ENCODE measurements at regions of chr16 and their contacts with region 1.

Region 1: DNA sequence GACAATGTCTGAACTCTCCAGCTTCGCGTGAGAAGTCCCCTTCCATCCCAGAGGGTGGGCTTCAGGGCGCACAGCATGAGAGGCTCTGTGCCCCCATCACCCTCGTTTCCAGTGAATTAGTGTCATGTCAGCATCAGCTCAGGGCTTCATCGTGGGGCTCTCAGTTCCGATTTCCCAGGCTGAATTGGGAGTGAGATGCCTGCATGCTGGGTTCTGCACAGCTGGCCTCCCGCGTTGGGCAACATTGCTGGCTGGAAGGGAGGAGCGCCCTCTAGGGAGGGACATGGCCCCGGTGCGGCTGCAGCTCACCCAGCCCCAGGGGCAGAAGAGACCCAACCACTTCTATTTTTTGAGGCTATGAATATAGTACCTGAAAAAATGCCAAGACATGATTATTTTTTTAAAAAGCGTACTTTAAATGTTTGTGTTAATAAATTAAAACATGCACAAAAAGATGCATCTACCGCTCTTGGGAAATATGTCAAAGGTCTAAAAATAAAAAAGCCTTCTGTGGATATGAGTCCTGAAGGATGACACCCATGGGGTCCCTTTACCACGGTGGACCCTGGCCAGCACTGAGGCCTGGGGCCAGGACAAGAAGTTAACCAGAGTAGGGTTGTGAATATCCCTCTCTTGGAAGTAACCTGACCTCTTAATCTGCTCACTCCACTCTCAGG is 10.5 kb upstream of the ITGAD start:
- DNase-seq: no peak
- ATAC-seq: peak; percentile 89
- H3K4me3 ChIP-seq: no peak overlapping the region
- H3K27ac ChIP-seq: no peak overlapping the region
- H3K4me1 ChIP-seq: no peaks in the 10 kb centered on the region
- H3K27me3 ChIP-seq: peaks cover 0 to 3% of the 10 kb centered on the region in 2 experiments; a peak in 1 of 4 replicates
- CTCF ChIP-seq: peak; percentile 78 to 92 (median 87)
- EP300 ChIP-seq: no peak
- POLR2A ChIP-seq: no peak
- RAD21 ChIP-seq: peak; percentile 82

Region 2: GRCh38 chr16:30961384-30961783 is 421.2 kb before region 1 on chr16:
- CTCF ChIA-PET with region 1: no interaction called
- POLR2A ChIA-PET with region 1: no interaction called
- RAD21 ChIA-PET with region 1: no interaction called
- SMC1A ChIA-PET with region 1: no interaction called
- in situ Hi-C with region 1: no loop called
- intact Hi-C with region 1: no loop called
- DNase-seq: no peak
- ATAC-seq: no peak
- H3K4me3 ChIP-seq: no peak overlapping the region
- H3K27ac ChIP-seq: no peak overlapping the region
- H3K4me1 ChIP-seq: peaks cover 8% of the 10 kb centered on the region
- H3K27me3 ChIP-seq: no peaks in the 10 kb centered on the region
- CTCF ChIP-seq: no peak
- EP300 ChIP-seq: no peak
- POLR2A ChIP-seq: no peak
- RAD21 ChIP-seq: no peak

Region 3: GRCh38 chr16:31202414-31203375 is 179.9 kb before region 1 on chr16 and contains the start of gene PYCARD:
- CTCF ChIA-PET with region 1: interaction called, 26 read pairs
- POLR2A ChIA-PET with region 1: no interaction called
- RAD21 ChIA-PET with region 1: interaction called, 6 read pairs
- SMC1A ChIA-PET with region 1: interaction called, 8 read pairs
- in situ Hi-C with region 1: no loop called
- intact Hi-C with region 1: loop called (anchors 1 kb)
- DNase-seq: no peak
- ATAC-seq: peak; percentile 51
- H3K4me3 ChIP-seq: peak within 1 kb of the TSS; percentile 86
- H3K27ac ChIP-seq: peak within 1 kb of the TSS; percentile 76
- H3K4me1 ChIP-seq: peaks cover 24% of the 10 kb centered on the region
- H3K27me3 ChIP-seq: no peaks in the 10 kb centered on the region
- CTCF ChIP-seq: no peak
- EP300 ChIP-seq: no peak
- POLR2A ChIP-seq: peak; percentile 76
- RAD21 ChIP-seq: no peak
- polyA plus RNA-seq, gene PYCARD: 5.1 to 14.9 TPM

Region 4: DNA sequence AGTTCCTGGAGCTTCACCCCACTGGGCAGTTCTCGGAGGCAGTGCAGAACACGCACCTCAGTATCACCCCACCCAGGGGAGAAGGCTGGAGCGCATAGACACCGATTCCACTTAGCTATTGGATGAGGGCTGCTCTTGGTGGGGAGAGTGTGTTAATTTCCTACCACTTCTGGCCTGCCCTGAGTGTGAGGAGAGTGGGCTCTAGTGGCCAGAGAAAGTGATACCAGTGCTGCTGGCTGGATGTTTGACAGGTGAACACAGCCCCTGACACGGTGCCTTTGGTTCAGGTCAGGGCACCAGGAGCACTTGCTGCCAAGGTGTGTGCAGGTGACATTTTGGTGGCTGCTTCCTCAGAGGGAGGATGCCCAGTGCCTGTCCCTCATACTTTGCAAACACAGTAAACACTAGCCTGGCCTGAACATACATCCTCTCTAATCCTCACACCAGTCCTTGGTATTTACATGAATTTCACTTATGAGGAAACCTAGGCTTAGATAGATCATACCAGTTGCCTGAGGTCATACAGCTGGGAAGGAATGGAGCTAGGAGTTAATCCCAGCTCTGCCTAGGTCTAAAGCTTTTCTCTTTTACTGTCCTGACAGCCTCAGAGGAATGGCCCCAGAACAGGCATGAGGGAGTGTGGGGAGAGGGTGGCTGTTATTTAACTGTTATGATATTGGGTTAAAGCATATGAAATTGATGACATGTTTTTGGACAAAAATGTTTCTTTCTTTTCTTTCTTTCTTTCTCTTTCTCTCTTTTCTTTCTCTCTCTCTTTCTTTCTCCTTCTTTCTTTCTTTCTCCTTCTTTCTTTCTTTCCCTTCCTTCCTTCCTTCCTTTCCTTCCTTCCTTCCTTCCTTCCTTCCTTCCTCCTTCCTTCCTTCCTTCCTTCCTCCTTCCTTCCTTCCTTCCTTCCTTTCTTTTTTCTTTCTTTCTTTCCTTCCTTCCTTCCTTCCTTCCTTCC is 48.7 kb before region 1 on chr16:
- CTCF ChIA-PET with region 1: interaction called, 9 read pairs
- POLR2A ChIA-PET with region 1: no interaction called
- RAD21 ChIA-PET with region 1: interaction called, 4 read pairs
- SMC1A ChIA-PET with region 1: interaction called, 13 read pairs
- in situ Hi-C with region 1: no loop called
- intact Hi-C with region 1: no loop called
- DNase-seq: no peak
- ATAC-seq: peak; percentile 96
- H3K4me3 ChIP-seq: no peak overlapping the region
- H3K27ac ChIP-seq: no peak overlapping the region
- H3K4me1 ChIP-seq: no peaks in the 10 kb centered on the region
- H3K27me3 ChIP-seq: no peaks in the 10 kb centered on the region
- CTCF ChIP-seq: peak; percentile 63 to 80 (median 77)
- EP300 ChIP-seq: no peak
- POLR2A ChIP-seq: no peak
- RAD21 ChIP-seq: peak; percentile 92

Region 5: GRCh38 chr16:31393056-31393455 is 10.4 kb after region 1 on chr16 and contains the start of gene ITGAD:
- CTCF ChIA-PET with region 1: interaction called, 12 read pairs
- POLR2A ChIA-PET with region 1: interaction called, 4 read pairs
- RAD21 ChIA-PET with region 1: interaction called, 3 read pairs
- SMC1A ChIA-PET with region 1: interaction called, 7 read pairs
- in situ Hi-C with region 1: no loop called
- intact Hi-C with region 1: no loop called
- DNase-seq: no peak
- ATAC-seq: peak; percentile 82
- H3K4me3 ChIP-seq: no peak within 1 kb of the TSS
- H3K27ac ChIP-seq: no peak within 1 kb of the TSS
- H3K4me1 ChIP-seq: peaks cover 4% of the 10 kb centered on the region
- H3K27me3 ChIP-seq: no peaks in the 10 kb centered on the region
- CTCF ChIP-seq: no peak
- EP300 ChIP-seq: no peak
- POLR2A ChIP-seq: no peak
- RAD21 ChIP-seq: no peak
- polyA plus RNA-seq, gene ITGAD: 0.29 to 0.31 TPM

Region 6: GRCh38 chr16:31427441-31428278 is 45.0 kb after region 1 on chr16:
- CTCF ChIA-PET with region 1: interaction called, 9 read pairs
- POLR2A ChIA-PET with region 1: interaction called, 3 read pairs
- RAD21 ChIA-PET with region 1: interaction called, 3 read pairs
- SMC1A ChIA-PET with region 1: interaction called, 18 read pairs
- in situ Hi-C with region 1: no loop called
- intact Hi-C with region 1: no loop called
- DNase-seq: no peak
- ATAC-seq: no peak
- H3K4me3 ChIP-seq: no peak overlapping the region
- H3K27ac ChIP-seq: no peak overlapping the region
- H3K4me1 ChIP-seq: peaks cover under 1% of the 10 kb centered on the region
- H3K27me3 ChIP-seq: no peaks in the 10 kb centered on the region
- CTCF ChIP-seq: no peak
- EP300 ChIP-seq: no peak
- POLR2A ChIP-seq: no peak
- RAD21 ChIP-seq: no peak

Measured in GM12878 (cell line).